Psoas muscle (tissue), 8 donors: ENCODE measurements at regions of chr5 and their contacts with region 1.

Region 1: GRCh38 chr5:55636683-55637082 is 75.4 kb downstream of the SLC38A9 start:
- DNase-seq: peak in 1 of 2 donors; percentile 30
- ATAC-seq: no peak
- H3K4me3 ChIP-seq: no peak overlapping the region
- H3K27ac ChIP-seq: peak overlapping the region; percentile 87
- H3K4me1 ChIP-seq: peaks cover 33% of the 10 kb centered on the region
- H3K27me3 ChIP-seq: no peaks in the 10 kb centered on the region
- CTCF ChIP-seq: no peak

Region 2: DNA sequence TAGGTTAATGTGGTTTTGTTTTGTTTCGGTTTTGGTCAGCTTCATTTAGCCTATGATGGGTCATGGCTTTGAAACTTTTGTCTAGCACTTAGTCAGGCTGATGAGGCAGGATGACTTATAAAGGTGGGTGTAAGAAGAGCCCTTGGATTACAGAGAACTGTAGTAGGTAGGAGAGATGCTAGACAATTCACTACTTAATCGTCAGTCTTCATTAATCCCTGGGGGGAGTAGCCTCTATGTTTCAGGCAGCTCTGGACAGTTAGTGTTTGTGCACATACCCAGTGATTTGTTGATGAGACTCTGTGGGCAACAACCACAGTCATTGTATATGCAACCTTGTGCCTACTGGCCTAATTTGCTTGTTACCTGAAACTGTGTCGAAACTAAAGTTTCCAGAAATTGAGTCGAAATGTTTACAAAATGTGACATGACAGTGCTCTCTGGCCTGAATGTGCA is 215.6 kb before region 1 on chr5:
- intact Hi-C with region 1: loop called in 1 of 2 experiments (anchors 10 kb)
- DNase-seq: no peak
- ATAC-seq: peak in 3 of 4 donors; percentile 41 to 46 (median 45)
- H3K4me3 ChIP-seq: no peak overlapping the region
- H3K27ac ChIP-seq: no peak overlapping the region
- H3K4me1 ChIP-seq: peaks cover 39% of the 10 kb centered on the region
- H3K27me3 ChIP-seq: no peaks in the 10 kb centered on the region
- CTCF ChIP-seq: no peak

Region 3: DNA sequence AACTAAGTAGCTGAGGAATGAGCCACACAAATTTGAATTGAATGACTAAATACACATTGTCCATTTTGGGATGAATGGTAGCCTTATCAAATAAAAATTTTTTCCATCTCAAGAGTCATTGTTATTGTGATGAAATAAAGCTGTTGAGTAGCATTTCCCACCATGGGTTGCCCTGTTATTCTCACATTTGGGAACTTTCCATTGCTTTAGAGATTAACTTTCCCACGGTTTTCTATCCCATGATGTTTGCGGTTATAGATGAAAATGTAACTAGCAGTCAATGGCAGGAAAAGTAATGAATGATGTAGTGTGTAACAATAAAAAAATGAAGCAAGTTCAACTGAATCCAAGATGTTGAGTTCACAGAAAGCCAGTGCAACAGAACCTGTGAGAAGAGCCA is 42.0 kb before region 1 on chr5:
- intact Hi-C with region 1: loop called in 1 of 2 experiments (anchors 2 kb)
- DNase-seq: no peak
- ATAC-seq: no peak
- H3K4me3 ChIP-seq: no peak overlapping the region
- H3K27ac ChIP-seq: no peak overlapping the region
- H3K4me1 ChIP-seq: peaks cover 10% of the 10 kb centered on the region
- H3K27me3 ChIP-seq: no peaks in the 10 kb centered on the region
- CTCF ChIP-seq: no peak

Region 4: GRCh38 chr5:55680353-55680752 is 43.7 kb after region 1 on chr5:
- intact Hi-C with region 1: loop called in 1 of 2 experiments (anchors 5 kb)
- DNase-seq: no peak
- ATAC-seq: peak in 3 of 4 donors; percentile 60 to 84 (median 76)
- H3K4me3 ChIP-seq: peak overlapping the region; percentile 51
- H3K27ac ChIP-seq: peak overlapping the region; percentile 58
- H3K4me1 ChIP-seq: peaks cover 24% of the 10 kb centered on the region
- H3K27me3 ChIP-seq: no peaks in the 10 kb centered on the region
- CTCF ChIP-seq: no peak

Region 5: DNA sequence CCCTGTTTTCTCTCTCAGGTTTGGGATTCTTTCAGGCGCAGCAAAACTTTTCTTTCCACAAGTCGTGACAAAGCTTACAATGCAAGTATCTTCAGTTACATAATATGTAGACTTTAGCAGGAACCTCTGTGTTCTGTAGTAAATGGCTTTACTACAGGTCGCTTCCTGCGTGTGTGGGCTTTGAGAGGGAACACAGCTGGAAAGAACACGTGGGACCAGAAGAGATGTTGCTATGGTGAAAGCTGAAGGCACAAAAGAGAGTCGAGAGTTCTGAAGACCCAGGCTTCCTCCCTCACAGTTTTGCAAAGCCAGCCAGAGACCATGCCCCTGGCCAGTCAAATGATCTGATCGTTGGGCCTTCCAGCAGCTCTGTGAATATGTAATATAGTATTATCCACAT is 592.4 kb after region 1 on chr5:
- intact Hi-C with region 1: no loop called
- DNase-seq: no peak
- ATAC-seq: no peak
- H3K4me3 ChIP-seq: no peak overlapping the region
- H3K27ac ChIP-seq: no peak overlapping the region
- H3K4me1 ChIP-seq: no peaks in the 10 kb centered on the region
- H3K27me3 ChIP-seq: peaks cover under 1 to 8% (median 3%) of the 10 kb centered on the region in 3 donors
- CTCF ChIP-seq: no peak